Aorta (tissue), 5 donors: ENCODE measurements at regions of chr4 and their contacts with region 1.

Region 1: DNA sequence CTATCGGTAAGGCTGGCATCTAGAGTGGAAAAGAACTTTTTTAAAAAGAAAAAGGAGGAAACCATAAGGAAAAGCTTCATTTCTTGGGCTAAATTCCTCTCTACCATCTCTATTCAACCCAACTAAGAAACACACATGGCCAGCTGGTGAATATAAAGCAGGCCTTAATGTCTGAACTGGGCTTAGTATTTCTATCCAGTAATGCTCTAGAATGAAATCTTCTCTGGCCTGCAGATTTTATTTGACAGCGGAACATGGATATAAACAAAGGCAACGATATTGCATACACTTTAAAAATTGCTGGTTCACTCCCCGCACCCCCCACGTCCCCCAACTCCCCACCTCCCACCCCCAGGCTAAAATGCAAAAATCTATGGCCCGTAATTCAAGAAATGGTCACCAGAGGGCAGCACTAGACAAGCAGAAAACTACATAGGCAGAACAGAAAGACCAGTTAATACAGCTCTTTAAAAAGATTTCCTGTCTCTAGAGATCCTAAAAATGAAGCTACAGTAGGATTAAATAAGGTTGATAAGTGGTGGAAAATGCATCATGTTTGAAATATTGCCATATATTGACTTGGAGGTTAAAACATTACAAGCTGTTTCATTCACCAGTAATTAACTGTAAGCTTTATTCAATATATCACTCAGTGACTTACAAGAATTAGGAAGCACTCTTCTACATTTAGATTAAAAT is 155.2 kb upstream of the GALNT7 start:
- DNase-seq: no peak
- ATAC-seq: peak; percentile 85
- H3K4me3 ChIP-seq: no peak overlapping the region
- H3K27ac ChIP-seq: no peak overlapping the region
- H3K4me1 ChIP-seq: no peaks in the 10 kb centered on the region
- H3K27me3 ChIP-seq: no peaks in the 10 kb centered on the region

Region 2: GRCh38 chr4:172842779-172843178 is 170.6 kb before region 1 on chr4:
- intact Hi-C with region 1: loop called in 1 of 2 experiments (anchors 10 kb)
- DNase-seq: no peak
- ATAC-seq: no peak
- H3K4me3 ChIP-seq: no peak overlapping the region
- H3K27ac ChIP-seq: no peak overlapping the region
- H3K4me1 ChIP-seq: peaks cover 0 to 7% of the 10 kb centered on the region in 2 donors
- H3K27me3 ChIP-seq: no peaks in the 10 kb centered on the region

Region 3: GRCh38 chr4:173257732-173258717 is 244.6 kb after region 1 on chr4:
- intact Hi-C with region 1: loop called in 1 of 2 experiments (anchors 5 kb)
- DNase-seq: peak; percentile 70 to 76
- ATAC-seq: peak; percentile 77
- H3K4me3 ChIP-seq: no peak overlapping the region
- H3K27ac ChIP-seq: no peak overlapping the region
- H3K4me1 ChIP-seq: peaks cover 0 to 5% of the 10 kb centered on the region in 2 donors
- H3K27me3 ChIP-seq: no peaks in the 10 kb centered on the region

Region 4: DNA sequence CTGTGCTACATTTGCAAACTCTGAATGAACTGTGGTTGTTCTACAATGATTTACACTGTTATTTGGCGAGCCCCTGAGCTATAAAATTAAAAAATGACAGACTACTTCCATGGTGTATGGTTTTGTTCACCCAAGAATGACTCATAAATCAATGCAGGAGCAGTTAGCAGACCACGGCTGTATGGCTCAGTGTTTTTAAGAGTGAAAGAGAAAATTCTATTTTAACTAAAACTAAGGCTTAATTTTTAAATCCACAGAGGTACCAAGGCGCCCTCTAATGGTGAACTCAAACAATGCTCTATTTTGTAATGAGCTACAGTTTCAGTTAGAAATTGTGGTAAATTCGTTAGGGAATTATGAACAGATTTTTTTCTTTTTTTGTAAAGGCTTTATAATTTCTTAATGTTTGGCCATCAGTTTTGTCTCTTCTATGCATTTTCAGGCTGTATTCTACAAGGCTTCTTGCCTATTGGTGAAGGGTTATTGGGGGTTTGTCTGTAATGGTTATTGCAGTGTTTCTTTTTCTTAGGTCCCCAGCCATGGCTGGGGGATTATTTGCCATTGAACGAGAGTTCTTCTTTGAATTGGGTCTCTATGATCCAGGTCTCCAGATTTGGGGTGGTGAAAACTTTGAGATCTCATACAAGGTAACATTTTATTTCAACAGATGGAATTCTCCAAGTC is 288.3 kb after region 1 on chr4:
- intact Hi-C with region 1: loop called (anchors 2 to 5 kb)
- DNase-seq: no peak
- ATAC-seq: no peak
- H3K4me3 ChIP-seq: no peak overlapping the region
- H3K27ac ChIP-seq: no peak overlapping the region
- H3K4me1 ChIP-seq: no peaks in the 10 kb centered on the region
- H3K27me3 ChIP-seq: no peaks in the 10 kb centered on the region